Lower leg skin (tissue), 4 donors: ENCODE measurements at regions of chr9 and their contacts with region 1.

Region 1: GRCh38 chr9:38038307-38039089 is 30.5 kb downstream of the SHB start:
- DNase-seq: no peak
- H3K4me3 ChIP-seq: no peak overlapping the region
- CTCF ChIP-seq: no peak
- POLR2A ChIP-seq: no peak

Region 2: DNA sequence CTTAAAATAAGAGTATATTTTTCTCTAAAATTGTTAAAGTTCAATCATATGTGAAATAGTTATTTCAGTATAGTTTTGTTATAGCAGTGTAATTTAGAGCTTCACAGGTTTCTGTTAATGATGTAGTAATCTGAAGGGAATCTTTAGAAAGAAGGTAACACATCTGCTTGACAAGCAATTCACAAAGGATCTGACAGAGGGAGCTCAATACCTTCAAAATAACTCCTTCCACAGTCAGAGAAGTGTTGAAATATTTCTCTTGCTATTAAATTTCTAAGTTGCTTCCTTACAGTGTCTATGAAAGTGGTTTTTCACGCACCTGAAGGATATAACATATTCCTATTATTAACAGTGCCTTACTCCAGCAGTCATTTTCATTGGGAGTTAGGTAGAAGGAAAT is 179.5 kb before region 1 on chr9:
- intact Hi-C with region 1: no loop called
- DNase-seq: no peak
- H3K4me3 ChIP-seq: no peak overlapping the region
- CTCF ChIP-seq: no peak
- POLR2A ChIP-seq: no peak

Region 3: GRCh38 chr9:38062498-38063361 is 24.2 kb after region 1 on chr9:
- intact Hi-C with region 1: loop called (anchors 1 kb)
- DNase-seq: no peak
- H3K4me3 ChIP-seq: no peak overlapping the region
- CTCF ChIP-seq: no peak
- POLR2A ChIP-seq: no peak

Region 4: GRCh38 chr9:38274800-38275199 is 236.3 kb after region 1 on chr9:
- intact Hi-C with region 1: no loop called
- DNase-seq: no peak
- H3K4me3 ChIP-seq: no peak overlapping the region
- CTCF ChIP-seq: no peak
- POLR2A ChIP-seq: no peak